Heart right ventricle (tissue), 16 donors: ENCODE measurements at regions of chr6 and their contacts with region 1.

Region 1: GRCh38 chr6:99514089-99514488 is 1.1 kb downstream of the USP45 start:
- DNase-seq: no peak
- ATAC-seq: no peak
- H3K4me3 ChIP-seq: peak overlapping the region in 8 of 10 donors; percentile 65 to 96 (median 88)
- H3K27ac ChIP-seq: peak overlapping the region in 2 of 10 donors; percentile 89 to 96
- H3K4me1 ChIP-seq: peaks cover 0 to 24% (median 15%) of the 10 kb centered on the region in 9 donors
- H3K27me3 ChIP-seq: no peaks in the 10 kb centered on the region
- CTCF ChIP-seq: no peak

Region 2: GRCh38 chr6:99434702-99435530 is 79.2 kb before region 1 on chr6:
- intact Hi-C with region 1: loop called in 2 of 10 experiments (anchors 10 kb)
- DNase-seq: no peak
- ATAC-seq: peak in 2 of 8 donors; percentile 58 to 64
- H3K4me3 ChIP-seq: no peak overlapping the region
- H3K27ac ChIP-seq: no peak overlapping the region
- H3K4me1 ChIP-seq: peaks cover 0 to 11% (median 0%) of the 10 kb centered on the region in 9 donors
- H3K27me3 ChIP-seq: no peaks in the 10 kb centered on the region
- CTCF ChIP-seq: peak; percentile 61 to 79 (median 72)

Region 3: DNA sequence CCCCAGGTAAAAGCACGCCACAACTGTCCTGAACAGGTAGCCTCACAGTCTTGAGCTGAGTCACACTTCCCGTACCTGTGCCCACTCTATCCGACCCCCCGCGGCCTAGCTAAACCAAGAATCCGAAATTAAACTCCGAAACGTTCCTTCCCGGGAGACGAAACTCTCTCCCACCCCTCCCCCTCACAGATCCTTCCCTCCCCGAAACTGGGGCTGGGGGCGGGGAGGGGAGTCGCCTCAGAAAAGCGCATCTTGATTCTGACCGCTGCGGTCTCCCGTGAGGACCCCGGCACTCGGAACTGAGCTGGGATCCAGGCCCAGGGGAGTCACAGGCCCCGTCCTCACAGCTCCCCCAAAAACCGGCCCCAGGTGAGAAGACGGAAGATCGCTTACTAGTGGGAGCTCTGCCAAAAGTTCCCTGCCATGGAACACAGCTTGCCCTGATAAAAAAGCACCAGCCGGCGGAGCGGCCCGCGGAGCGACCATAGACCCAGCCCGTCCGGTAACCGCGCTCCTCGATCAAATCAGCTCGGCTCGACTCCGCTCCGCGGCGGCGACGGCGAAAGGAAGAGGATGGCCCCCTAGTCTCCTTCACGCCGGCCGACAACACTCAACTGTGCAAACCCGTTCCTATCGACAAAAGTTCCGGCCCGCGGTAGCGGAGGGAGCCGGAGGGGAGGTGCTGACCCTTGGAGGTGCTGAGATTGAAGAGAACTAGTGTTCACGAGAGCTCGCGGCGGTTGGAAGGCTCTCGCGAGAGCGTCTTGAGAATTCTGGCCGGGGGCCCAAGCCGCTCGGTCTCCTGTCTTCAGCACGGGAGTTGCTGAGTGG is 54.2 kb after region 1 on chr6 and contains the start of gene CCNC:
- intact Hi-C with region 1: loop called in 3 of 10 experiments (anchors 2 to 5 kb)
- DNase-seq: peak; percentile 93
- ATAC-seq: peak; percentile 99 to 100 (median 99)
- H3K4me3 ChIP-seq: peak within 1 kb of the TSS; percentile 76 to 98 (median 94)
- H3K27ac ChIP-seq: peak within 1 kb of the TSS; percentile 26 to 89 (median 84)
- H3K4me1 ChIP-seq: peaks cover 4 to 33% (median 26%) of the 10 kb centered on the region in 9 donors
- H3K27me3 ChIP-seq: no peaks in the 10 kb centered on the region
- CTCF ChIP-seq: no peak
- total RNA-seq, gene CCNC: 14.2 to 24.1 (median 18.6) TPM

Region 4: DNA sequence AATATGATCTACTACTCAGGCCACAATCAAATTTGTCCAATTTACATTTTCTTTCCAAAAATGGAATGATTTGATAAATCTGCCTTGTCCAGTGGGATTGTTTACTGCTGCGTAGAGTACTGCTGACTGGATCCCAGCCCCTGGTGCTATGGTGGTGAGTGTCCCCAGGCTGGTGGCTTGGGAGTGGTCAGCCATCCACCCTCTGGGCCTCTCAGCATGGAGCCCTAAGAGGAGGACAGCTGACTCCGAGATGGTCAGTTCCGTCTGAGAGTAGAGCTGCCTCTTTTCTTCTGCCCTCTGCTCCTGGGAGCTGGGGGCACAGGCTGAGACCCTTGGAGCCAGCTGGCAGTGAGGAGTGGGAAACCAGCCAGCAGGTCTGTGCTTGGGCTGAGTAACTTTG is 115.2 kb after region 1 on chr6:
- intact Hi-C with region 1: no loop called
- DNase-seq: no peak
- ATAC-seq: no peak
- H3K4me3 ChIP-seq: no peak overlapping the region
- H3K27ac ChIP-seq: no peak overlapping the region
- H3K4me1 ChIP-seq: no peaks in the 10 kb centered on the region
- H3K27me3 ChIP-seq: peaks cover 0 to 50% (median 36%) of the 10 kb centered on the region in 7 donors
- CTCF ChIP-seq: no peak